MCF 10A (cell line): ENCODE measurements at regions of chr6 and their contacts with region 1.

Region 1: GRCh38 chr6:81465859-81466258 is 286.6 kb downstream of the TENT5A start:
- DNase-seq: peak; percentile 49
- H3K4me3 Mint-ChIP-seq: no peak overlapping the region
- H3K27ac Mint-ChIP-seq: no peak overlapping the region
- H3K4me1 Mint-ChIP-seq: no peaks in the 10 kb centered on the region
- H3K27me3 Mint-ChIP-seq: no peaks in the 10 kb centered on the region
- CTCF ChIP-seq: peak; percentile 48

Region 2: DNA sequence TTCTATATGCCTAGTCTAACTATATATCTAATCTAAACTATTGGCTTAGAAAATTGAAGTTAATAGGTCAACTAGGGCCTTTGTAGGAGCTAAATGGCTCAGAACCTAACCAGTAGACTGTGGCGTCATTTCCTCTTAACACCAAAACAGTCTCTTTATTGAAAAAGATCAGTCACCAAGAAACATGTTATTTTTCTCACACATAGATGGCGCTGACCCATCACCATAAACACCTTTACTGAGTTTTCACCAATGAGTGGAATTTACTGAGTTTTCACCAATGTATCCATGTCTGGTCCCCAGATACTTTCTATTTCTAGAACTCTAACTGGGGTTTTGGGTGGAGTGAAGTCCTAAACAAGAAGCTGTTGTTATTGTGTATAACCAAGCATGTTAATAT is 723.4 kb before region 1 on chr6:
- CTCF ChIA-PET with region 1: no interaction called
- POLR2A ChIA-PET with region 1: no interaction called
- intact Hi-C with region 1: loop called (anchors 1 kb)
- DNase-seq: peak; percentile 47
- H3K4me3 Mint-ChIP-seq: no peak overlapping the region
- H3K27ac Mint-ChIP-seq: no peak overlapping the region
- H3K4me1 Mint-ChIP-seq: no peaks in the 10 kb centered on the region
- H3K27me3 Mint-ChIP-seq: no peaks in the 10 kb centered on the region
- CTCF ChIP-seq: peak; percentile 58

Region 3: DNA sequence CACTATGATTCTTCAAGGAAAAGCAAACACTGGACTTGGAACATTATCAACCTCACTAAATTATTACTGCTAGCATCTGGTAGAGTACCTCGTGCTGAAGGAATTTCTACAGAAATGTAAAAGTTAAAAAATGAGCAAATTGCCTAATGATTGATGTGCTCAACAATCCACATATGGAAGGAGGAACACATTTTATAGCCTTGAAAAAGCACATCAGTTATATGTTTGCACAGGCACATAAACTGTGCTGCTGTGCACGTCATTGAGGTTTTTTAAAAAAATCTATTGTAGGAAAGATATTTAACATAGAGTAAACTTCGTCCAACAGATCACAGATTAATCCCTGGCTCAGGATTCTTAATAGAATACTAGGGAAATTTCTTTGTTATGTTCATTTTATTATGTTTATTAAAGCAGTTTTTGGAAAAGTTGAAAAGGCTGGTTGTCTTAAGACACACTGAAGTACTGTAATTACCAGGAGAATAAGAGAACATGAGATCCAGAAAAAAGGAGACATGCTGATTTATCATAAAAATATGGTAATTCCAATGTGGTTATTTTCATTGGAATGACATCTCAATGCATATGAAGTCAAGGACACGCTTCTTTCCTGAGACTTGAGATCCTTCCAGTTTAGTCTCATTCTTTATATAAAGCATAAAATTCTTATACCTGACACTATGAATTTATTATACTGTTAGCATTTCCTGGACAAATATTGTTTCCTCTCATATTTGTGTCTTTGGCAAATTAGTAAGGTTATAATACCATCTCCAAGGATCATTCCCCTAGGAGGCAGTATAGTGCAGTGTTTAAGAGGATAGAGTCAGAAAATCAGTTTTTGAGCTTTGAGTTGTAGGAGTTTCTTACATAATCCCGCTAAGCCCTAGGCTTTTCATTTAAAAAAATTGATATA is 224.5 kb before region 1 on chr6:
- CTCF ChIA-PET with region 1: no interaction called
- POLR2A ChIA-PET with region 1: no interaction called
- intact Hi-C with region 1: loop called (anchors 1 kb)
- DNase-seq: peak; percentile 45
- H3K4me3 Mint-ChIP-seq: no peak overlapping the region
- H3K27ac Mint-ChIP-seq: no peak overlapping the region
- H3K4me1 Mint-ChIP-seq: no peaks in the 10 kb centered on the region
- H3K27me3 Mint-ChIP-seq: no peaks in the 10 kb centered on the region
- CTCF ChIP-seq: peak; percentile 37

Region 4: DNA sequence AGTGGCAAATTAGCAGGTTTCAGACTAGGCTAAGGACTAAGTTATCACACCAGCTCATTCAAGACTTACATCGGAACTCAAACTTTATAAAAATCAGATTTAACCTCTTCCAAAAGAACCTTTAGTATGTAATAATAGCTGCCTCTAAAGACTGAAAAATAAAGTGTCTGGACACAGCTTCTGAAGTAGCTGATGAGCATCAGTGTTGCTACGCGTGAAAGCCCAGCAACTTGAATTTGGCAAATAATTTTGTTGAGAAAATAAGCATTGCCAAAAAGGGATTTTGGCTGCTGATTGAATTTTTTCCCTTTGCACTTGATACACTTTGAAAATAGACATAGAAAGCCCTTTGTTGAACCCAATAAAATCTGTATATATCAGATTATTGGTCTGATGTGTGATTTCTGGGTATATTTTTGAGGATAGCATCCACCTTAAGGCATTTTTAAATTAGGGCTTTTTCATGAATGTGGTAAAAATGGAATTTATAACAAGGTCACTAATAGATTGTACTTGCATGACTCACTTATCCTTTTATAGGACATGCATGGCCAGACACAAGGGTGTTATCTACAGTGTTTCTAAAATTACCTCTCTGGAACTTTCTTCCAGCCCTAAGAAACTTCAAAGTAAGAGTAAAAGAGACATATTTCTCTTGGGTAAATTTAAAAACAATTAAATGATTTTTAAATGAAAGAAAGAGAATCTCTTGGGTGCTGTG is 63.7 kb before region 1 on chr6:
- CTCF ChIA-PET with region 1: no interaction called
- POLR2A ChIA-PET with region 1: no interaction called
- intact Hi-C with region 1: no loop called
- DNase-seq: no peak
- H3K4me3 Mint-ChIP-seq: no peak overlapping the region
- H3K27ac Mint-ChIP-seq: no peak overlapping the region
- H3K4me1 Mint-ChIP-seq: no peaks in the 10 kb centered on the region
- H3K27me3 Mint-ChIP-seq: no peaks in the 10 kb centered on the region
- CTCF ChIP-seq: no peak